ENCODE measurements at regions of chr14 and their contacts with region 1.

Region 1: GRCh38 chr14:101823511-101824120 is 62.1 kb downstream of the PPP2R5C start:
- DNase-seq: peak in 8 of 9 donors; percentile 71 to 87 (median 82)
- ATAC-seq: peak; percentile 72
- H3K4me3 ChIP-seq: peak overlapping the region; percentile 67
- H3K4me3 Mint-ChIP-seq: peak overlapping the region; percentile 85 to 96 (median 90)
- H3K27ac ChIP-seq: peak overlapping the region; percentile 97
- H3K27ac Mint-ChIP-seq: peak overlapping the region; percentile 90 to 100 (median 99)
- H3K4me1 ChIP-seq: peaks cover 64 to 68% of the 10 kb centered on the region in 2 donors
- H3K4me1 Mint-ChIP-seq: peaks cover 65 to 91% (median 86%) of the 10 kb centered on the region in 7 donors
- H3K27me3 ChIP-seq: no peaks in the 10 kb centered on the region
- H3K27me3 Mint-ChIP-seq: peaks cover 0 to 2% (median 0%) of the 10 kb centered on the region in 5 donors

Region 2: GRCh38 chr14:101294136-101294535 is 529.5 kb before region 1 on chr14:
- CTCF ChIA-PET with region 1: no interaction called
- POLR2A ChIA-PET with region 1: no interaction called
- intact Hi-C with region 1: no loop called
- DNase-seq: no peak
- ATAC-seq: no peak
- H3K4me3 ChIP-seq: no peak overlapping the region
- H3K4me3 Mint-ChIP-seq: no peak overlapping the region
- H3K27ac ChIP-seq: no peak overlapping the region
- H3K27ac Mint-ChIP-seq: no peak overlapping the region
- H3K4me1 ChIP-seq: no peaks in the 10 kb centered on the region
- H3K4me1 Mint-ChIP-seq: no peaks in the 10 kb centered on the region
- H3K27me3 ChIP-seq: no peaks in the 10 kb centered on the region
- H3K27me3 Mint-ChIP-seq: peaks cover 7 to 60% (median 38%) of the 10 kb centered on the region in 5 donors

Region 3: DNA sequence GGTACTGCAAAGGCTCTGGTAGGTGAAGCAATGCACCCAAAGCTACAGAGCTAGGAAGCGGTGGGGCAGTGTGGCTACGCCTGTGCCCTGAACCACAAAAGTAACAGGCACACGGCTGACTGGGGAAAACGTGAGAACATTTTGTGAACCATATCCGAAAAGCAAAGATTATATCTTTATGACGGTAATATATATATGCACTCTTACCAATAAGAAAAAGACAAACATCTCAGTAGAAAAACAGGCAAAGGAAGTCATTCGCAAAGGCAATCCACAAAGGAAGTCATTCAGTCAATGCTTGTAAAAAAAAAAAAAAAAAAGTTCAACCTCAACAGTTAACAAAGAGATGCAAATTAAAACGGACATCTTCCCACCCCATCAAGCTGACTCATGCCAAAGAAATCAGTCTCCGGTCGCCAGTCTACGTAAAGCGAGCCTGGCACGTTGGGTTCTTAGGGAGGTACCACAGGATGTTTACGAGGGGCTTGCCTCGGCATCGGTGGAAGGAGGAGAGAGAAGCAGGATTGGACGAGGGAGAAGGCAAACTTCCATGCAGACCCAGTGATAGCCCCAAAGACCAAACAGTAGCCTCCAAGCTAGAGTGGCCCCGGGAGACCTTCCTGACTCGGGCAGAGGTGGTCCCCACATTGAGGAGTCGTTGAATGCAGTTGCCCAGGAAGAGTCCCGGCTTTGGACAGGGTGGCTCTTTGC is 101.5 kb before region 1 on chr14:
- CTCF ChIA-PET with region 1: interaction called, 4 read pairs
- POLR2A ChIA-PET with region 1: interaction called, 10 read pairs
- intact Hi-C with region 1: loop called (anchors 1 to 2 kb)
- DNase-seq: peak; percentile 49 to 93 (median 88)
- ATAC-seq: peak; percentile 86
- H3K4me3 ChIP-seq: peak overlapping the region; percentile 24
- H3K4me3 Mint-ChIP-seq: peak overlapping the region; percentile 73 to 92 (median 80)
- H3K27ac ChIP-seq: peak overlapping the region; percentile 76
- H3K27ac Mint-ChIP-seq: peak overlapping the region; percentile 92 to 99 (median 97)
- H3K4me1 ChIP-seq: peaks cover 34 to 50% of the 10 kb centered on the region in 2 donors
- H3K4me1 Mint-ChIP-seq: peaks cover 17 to 74% (median 52%) of the 10 kb centered on the region in 7 donors
- H3K27me3 ChIP-seq: no peaks in the 10 kb centered on the region
- H3K27me3 Mint-ChIP-seq: no peaks in the 10 kb centered on the region

Region 4: GRCh38 chr14:101774006-101774795 is 49.4 kb before region 1 on chr14:
- CTCF ChIA-PET with region 1: interaction called, 25 read pairs
- POLR2A ChIA-PET with region 1: interaction called, 18 read pairs
- intact Hi-C with region 1: loop called (anchors 1 to 2 kb)
- DNase-seq: no peak
- ATAC-seq: no peak
- H3K4me3 ChIP-seq: no peak overlapping the region
- H3K4me3 Mint-ChIP-seq: no peak overlapping the region
- H3K27ac ChIP-seq: no peak overlapping the region
- H3K27ac Mint-ChIP-seq: peak overlapping the region in 6 of 9 donors; percentile 14 to 70 (median 28)
- H3K4me1 ChIP-seq: no peaks in the 10 kb centered on the region
- H3K4me1 Mint-ChIP-seq: peaks cover 18 to 41% (median 35%) of the 10 kb centered on the region in 7 donors
- H3K27me3 ChIP-seq: no peaks in the 10 kb centered on the region
- H3K27me3 Mint-ChIP-seq: peaks cover 0 to 8% (median 0%) of the 10 kb centered on the region in 5 donors

Region 5: DNA sequence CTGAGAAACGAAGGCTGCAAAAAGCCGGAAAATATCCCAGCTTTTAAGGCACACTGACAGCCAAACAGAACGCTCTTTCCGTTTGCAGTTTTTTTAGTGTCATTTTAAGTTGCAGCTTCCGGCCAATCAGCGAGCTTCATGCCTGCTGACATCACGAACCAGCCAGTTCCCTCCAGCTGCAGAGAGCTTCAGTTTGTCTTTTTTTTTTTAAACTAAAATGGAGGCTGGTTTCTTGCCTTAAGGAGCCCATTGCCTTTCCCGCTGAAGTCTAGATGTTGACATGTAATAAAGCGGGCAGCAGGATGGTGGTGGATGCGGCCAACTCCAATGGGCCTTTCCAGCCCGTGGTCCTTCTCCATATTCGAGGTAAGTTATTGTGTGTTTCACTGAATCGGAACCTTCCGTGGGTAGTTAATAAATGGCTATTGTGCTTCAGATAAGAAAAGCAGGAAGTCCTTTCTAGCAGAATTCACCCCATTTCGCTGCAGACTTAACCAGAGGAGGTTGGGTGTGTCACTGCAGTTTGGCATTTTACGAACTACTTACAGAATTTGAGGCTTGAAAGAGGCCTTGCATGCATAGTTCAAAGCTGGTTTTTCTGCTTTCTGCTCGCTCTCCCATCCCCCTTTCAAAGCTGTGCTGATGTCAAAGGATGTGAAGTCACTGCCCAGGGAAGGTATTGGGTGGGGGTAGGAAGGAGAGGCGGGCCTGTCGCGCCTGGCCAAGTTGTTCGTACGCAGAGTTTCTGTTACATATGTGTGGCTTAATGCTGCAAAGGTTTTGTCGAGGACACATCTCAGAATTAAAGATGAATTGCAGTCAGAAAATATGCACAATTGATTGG is 13.7 kb before region 1 on chr14:
- CTCF ChIA-PET with region 1: interaction called, 57 read pairs
- POLR2A ChIA-PET with region 1: interaction called, 426 read pairs
- intact Hi-C with region 1: loop called (anchors 1 kb)
- DNase-seq: peak; percentile 57 to 97 (median 95)
- ATAC-seq: peak; percentile 94
- H3K4me3 ChIP-seq: peak overlapping the region; percentile 92
- H3K4me3 Mint-ChIP-seq: peak overlapping the region; percentile 94 to 98 (median 96)
- H3K27ac ChIP-seq: peak overlapping the region; percentile 99
- H3K27ac Mint-ChIP-seq: peak overlapping the region; percentile 90 to 100 (median 99)
- H3K4me1 ChIP-seq: peaks cover 36 to 38% of the 10 kb centered on the region in 2 donors
- H3K4me1 Mint-ChIP-seq: peaks cover 27 to 62% (median 55%) of the 10 kb centered on the region in 7 donors
- H3K27me3 ChIP-seq: no peaks in the 10 kb centered on the region
- H3K27me3 Mint-ChIP-seq: no peaks in the 10 kb centered on the region

Region 6: DNA sequence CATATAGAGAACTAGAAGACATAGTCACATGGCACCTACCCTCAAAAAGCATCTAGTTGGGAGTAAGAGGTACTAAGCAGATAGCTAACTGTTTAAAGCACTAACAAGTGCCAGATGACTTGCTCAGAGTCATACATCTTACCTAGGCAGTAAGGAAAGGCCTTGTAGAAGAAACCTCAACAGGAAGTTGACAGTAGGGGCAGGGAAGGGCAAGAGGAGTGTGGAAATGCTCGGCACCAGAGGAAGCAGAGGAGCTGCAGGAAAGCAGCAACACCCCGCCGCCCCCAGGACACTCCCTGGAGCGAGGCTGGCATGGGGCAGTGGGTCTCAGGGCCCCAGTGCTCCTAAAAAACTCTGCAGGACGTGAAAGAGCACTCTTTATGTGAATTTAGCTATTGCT is 30.8 kb after region 1 on chr14:
- CTCF ChIA-PET with region 1: no interaction called
- POLR2A ChIA-PET with region 1: interaction called, 13 read pairs
- intact Hi-C with region 1: no loop called
- DNase-seq: peak in 6 of 9 donors; percentile 32 to 47 (median 42)
- ATAC-seq: peak; percentile 73
- H3K4me3 ChIP-seq: peak overlapping the region; percentile 22
- H3K4me3 Mint-ChIP-seq: peak overlapping the region; percentile 46 to 85 (median 72)
- H3K27ac ChIP-seq: peak overlapping the region; percentile 36
- H3K27ac Mint-ChIP-seq: peak overlapping the region; percentile 69 to 88 (median 84)
- H3K4me1 ChIP-seq: peaks cover 51 to 71% of the 10 kb centered on the region in 2 donors
- H3K4me1 Mint-ChIP-seq: peaks cover 65 to 96% (median 92%) of the 10 kb centered on the region in 7 donors
- H3K27me3 ChIP-seq: no peaks in the 10 kb centered on the region
- H3K27me3 Mint-ChIP-seq: no peaks in the 10 kb centered on the region

Region 7: DNA sequence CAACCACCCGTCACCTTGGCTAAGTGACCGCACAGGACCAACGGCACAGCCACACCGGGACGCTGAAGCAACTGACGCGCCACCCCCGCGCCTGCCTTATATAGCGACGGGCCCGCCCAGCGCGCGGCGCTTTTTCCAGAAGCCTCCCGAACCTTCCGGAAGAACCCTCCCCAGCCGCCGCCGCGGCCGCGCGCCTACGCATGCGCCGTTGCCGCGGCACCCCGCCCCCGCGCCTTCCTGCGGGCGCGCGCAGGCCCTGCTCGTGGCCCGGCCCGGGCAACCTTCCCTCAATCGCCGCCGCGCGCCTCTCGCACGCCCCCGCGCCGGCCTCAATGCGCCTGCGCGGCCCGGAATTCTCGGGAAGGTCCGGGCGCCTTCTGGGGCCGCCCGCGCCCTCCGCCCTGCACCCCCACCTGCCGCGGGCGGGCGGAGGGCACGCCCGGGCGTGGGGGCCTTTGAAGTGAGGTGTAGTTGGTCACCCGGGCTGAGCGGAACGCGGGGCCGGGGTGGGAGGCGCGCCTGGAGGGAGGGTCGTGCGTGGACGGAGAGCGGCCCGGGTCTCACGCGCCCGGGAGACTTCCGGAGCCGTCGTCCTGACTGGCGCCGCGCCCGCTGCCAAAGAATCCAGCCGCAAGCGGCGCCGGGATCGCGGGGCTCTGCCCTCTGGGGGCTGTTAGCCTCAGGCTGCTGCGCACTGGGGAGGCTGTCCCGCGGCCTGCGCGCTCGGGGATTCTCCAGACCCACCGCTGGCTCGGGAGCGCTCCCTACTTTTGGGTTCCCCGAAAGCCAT is 263.6 kb after region 1 on chr14 and contains the start of gene HSP90AA1:
- CTCF ChIA-PET with region 1: no interaction called
- POLR2A ChIA-PET with region 1: no interaction called
- intact Hi-C with region 1: loop called (anchors 5 kb)
- DNase-seq: peak; percentile 89 to 99 (median 94)
- ATAC-seq: peak; percentile 87
- H3K4me3 ChIP-seq: peak within 1 kb of the TSS; percentile 91
- H3K4me3 Mint-ChIP-seq: peak within 1 kb of the TSS; percentile 90 to 98 (median 96)
- H3K27ac ChIP-seq: peak within 1 kb of the TSS; percentile 98
- H3K27ac Mint-ChIP-seq: peak within 1 kb of the TSS; percentile 93 to 98 (median 96)
- H3K4me1 ChIP-seq: peaks cover 41 to 43% of the 10 kb centered on the region in 2 donors
- H3K4me1 Mint-ChIP-seq: peaks cover 44 to 70% (median 62%) of the 10 kb centered on the region in 7 donors
- H3K27me3 ChIP-seq: no peaks in the 10 kb centered on the region
- H3K27me3 Mint-ChIP-seq: no peaks in the 10 kb centered on the region
- total RNA-seq, gene HSP90AA1: 229 to 591 (median 361) TPM

Measured in naive thymus-derived CD4-positive, alpha-beta T cell (primary cell).